CD8-positive, alpha-beta memory T cell (primary cell): ENCODE measurements at regions of chr5 and their contacts with region 1.

Region 1: DNA sequence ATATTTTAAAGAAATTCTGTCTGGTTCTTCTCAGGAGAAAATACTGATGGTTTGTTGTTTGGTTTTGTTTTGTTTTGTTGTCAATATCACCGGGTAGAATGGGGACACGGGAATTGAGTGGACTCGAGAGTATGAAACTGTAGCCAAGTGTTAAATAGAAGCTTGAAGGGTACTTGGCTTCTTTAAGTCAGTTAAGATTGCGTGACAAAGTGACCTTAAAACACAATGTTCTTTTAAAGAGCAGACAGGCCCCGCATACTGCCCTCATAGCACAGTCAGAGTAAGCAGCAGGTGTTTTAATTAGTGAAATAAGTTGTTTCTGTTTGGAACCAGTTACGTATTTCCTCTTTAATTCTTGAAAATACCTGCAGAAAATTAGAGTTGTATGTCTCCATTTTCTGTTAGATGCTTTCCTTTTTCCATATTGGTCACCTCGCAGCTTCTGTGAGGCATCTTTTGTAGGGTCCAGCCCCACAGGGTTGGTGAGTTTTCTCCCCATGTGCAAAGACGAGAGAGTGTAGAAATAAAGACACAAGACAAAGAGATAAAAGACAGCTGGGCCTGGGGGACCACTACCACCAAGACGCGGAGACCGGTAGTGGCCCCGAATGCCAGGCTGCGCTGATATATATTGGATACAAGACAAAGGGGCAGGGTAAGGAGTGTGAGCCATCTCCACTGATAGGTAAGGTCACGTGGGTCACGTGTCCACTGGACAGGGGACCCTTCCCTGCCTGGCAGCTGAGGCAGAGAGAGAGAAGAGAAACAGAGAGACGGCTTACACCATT is 9.6 kb downstream of the TRIP13 start:
- DNase-seq: no peak
- H3K4me3 ChIP-seq: no peak overlapping the region
- H3K4me3 Mint-ChIP-seq: no peak overlapping the region
- H3K27ac ChIP-seq: no peak overlapping the region
- H3K27ac Mint-ChIP-seq: no peak overlapping the region
- H3K4me1 ChIP-seq: no peaks in the 10 kb centered on the region
- H3K4me1 Mint-ChIP-seq: no peaks in the 10 kb centered on the region
- H3K27me3 ChIP-seq: no peaks in the 10 kb centered on the region
- H3K27me3 Mint-ChIP-seq: no peaks in the 10 kb centered on the region

Region 2: GRCh38 chr5:671459-672328 is 230.6 kb before region 1 on chr5:
- CTCF ChIA-PET with region 1: interaction called, 62 read pairs
- POLR2A ChIA-PET with region 1: no interaction called
- DNase-seq: peak; percentile 53 to 82 (median 62)
- H3K4me3 ChIP-seq: no peak overlapping the region
- H3K4me3 Mint-ChIP-seq: peak overlapping the region in 3 of 7 donors; percentile 66 to 79 (median 77)
- H3K27ac ChIP-seq: peak overlapping the region; percentile 54
- H3K27ac Mint-ChIP-seq: peak overlapping the region in 6 of 8 donors; percentile 51 to 99 (median 95)
- H3K4me1 ChIP-seq: peaks cover 23% of the 10 kb centered on the region
- H3K4me1 Mint-ChIP-seq: peaks cover 11 to 25% (median 15%) of the 10 kb centered on the region in 3 donors
- H3K27me3 ChIP-seq: no peaks in the 10 kb centered on the region
- H3K27me3 Mint-ChIP-seq: peaks cover 0 to 7% of the 10 kb centered on the region in 2 donors

Region 3: GRCh38 chr5:926417-927171 is 24.3 kb after region 1 on chr5:
- CTCF ChIA-PET with region 1: no interaction called
- POLR2A ChIA-PET with region 1: no interaction called
- DNase-seq: no peak
- H3K4me3 ChIP-seq: no peak overlapping the region
- H3K4me3 Mint-ChIP-seq: peak overlapping the region in 2 of 7 donors; percentile 12 to 24
- H3K27ac ChIP-seq: no peak overlapping the region
- H3K27ac Mint-ChIP-seq: no peak overlapping the region
- H3K4me1 ChIP-seq: no peaks in the 10 kb centered on the region
- H3K4me1 Mint-ChIP-seq: peaks cover 0 to 7% (median 5%) of the 10 kb centered on the region in 3 donors
- H3K27me3 ChIP-seq: peaks cover 7% of the 10 kb centered on the region
- H3K27me3 Mint-ChIP-seq: peaks cover 18 to 40% of the 10 kb centered on the region in 2 donors